ENCODE measurements at regions of chr6 and their contacts with region 1.

Region 1: DNA sequence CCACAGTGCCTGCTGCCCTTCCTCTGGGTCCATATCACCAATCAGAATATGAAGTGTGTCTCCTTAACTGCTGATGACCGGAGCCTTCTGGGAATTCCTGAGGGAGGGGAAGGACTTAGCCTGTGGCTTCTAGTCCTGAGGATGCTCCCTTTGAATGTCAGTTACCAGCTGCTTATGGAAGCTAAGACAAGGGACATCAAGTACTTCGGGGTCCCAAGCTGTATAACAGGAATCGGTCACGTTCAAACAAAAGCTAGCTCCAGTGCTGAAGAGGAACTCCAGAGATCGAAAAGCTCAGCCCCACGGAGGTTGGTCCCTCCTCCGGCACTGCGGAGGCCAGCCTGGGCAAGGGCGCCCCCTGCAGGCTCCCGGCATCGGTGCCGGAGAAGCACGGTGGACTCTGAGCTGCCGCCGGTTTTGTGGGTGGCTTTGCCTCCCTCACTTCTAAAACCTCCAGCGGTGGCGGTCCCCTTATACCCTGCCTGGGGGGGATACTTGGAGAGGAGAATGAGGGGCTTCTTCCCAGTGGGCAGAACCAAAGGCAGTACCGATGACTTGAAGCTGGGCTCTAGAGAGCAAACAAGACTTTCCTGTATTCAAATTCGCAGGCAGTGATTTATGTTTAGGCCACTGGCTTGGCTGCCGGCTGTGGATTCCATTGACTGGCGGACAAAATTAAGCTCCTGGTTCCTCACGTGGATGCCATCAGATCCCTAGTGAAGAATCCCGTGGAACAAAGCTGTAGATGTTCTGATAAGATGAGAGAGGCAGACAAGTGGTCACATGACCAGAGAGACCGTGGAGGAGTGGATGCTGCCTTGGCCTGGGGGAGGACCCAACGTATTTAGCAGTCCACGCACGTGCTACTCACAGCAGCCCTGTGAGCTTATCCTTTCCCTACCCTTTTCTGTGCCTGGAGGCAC is 16.2 kb upstream of the UBR2 start:
- DNase-seq: peak; percentile 93
- CTCF ChIP-seq: peak; percentile 98

Region 2: DNA sequence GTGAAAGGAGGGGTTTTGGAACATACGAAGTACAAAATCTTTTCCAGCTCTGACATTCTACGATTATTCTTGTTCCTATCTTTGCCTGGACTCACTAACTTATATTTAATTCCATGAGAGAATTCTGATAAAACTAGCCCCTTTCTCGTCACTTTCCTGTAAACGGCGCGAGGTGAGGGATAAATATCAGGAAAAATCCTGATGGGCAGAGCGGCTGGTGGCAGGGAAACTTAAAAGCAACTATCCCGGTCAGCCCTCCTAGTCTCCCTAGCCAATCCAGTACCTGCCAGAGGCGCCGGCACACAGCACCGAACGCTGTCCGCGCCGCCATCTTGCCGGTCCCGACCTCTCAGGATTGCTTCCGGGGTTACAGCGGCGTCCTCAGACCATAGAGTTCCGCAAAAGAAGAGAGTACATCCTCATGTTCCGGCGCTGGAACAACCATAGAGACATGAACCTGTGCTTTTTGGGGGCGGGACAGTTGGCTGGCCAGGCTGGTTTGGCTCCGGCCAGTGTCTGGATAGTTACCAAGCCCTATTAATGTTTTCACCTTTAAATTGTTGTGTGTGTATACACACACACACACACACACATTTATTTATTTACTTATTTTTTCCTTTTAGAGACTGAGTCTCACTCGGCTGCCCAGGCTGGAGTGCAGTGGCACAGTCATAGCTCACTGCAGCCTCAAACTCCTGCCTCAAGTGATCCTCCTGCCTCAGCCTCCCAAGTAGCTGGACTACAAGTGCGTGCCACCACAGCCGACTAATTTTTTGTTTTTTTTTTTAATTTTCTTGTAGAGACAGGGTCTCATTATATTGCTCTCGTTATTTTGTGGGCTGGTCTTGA is 329.9 kb before region 1 on chr6 and contains the start of gene MRPS10:
- CTCF ChIA-PET with region 1: interaction called, 13 read pairs
- POLR2A ChIA-PET with region 1: no interaction called
- DNase-seq: peak; percentile 92
- CTCF ChIP-seq: no peak

Region 3: GRCh38 chr6:42271834-42272805 is 275.5 kb before region 1 on chr6:
- CTCF ChIA-PET with region 1: interaction called, 13 read pairs
- POLR2A ChIA-PET with region 1: no interaction called
- DNase-seq: no peak
- CTCF ChIP-seq: no peak

Region 4: GRCh38 chr6:42332916-42333315 is 214.8 kb before region 1 on chr6:
- CTCF ChIA-PET with region 1: interaction called, 13 read pairs
- POLR2A ChIA-PET with region 1: no interaction called
- DNase-seq: no peak
- CTCF ChIP-seq: no peak

Region 5: DNA sequence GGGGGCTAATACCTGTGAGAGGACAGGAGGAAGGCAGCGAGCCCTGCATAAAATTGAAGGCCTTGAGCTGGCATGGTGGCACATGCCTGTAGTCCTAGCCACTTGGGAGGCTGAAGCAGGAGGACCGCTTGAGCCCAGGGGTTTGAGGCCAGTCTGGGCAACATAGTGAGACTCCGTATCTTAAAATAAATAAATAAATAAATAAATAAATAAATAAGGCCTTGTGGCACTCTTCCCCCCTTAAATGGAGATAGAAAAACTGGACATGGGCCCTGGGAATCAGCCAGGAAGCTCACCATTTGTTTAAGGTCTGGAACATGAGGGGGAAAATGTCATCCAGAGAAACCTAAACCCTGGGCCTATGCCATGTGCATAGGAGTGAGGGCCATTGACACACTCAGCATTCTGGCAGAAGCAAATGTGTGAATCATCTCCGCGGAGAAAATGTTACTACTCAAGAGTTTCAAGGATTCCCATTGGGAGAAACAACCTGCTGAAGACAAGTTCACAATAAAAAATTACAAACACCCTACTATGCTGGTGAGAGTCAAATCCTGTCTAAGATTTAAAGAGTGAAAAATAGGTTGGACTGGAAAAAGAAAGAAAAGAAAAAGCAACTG is 35.8 kb before region 1 on chr6:
- CTCF ChIA-PET with region 1: interaction called, 29 read pairs
- POLR2A ChIA-PET with region 1: no interaction called
- DNase-seq: no peak
- CTCF ChIP-seq: no peak

Region 6: GRCh38 chr6:42537536-42537935 is 10.1 kb before region 1 on chr6:
- CTCF ChIA-PET with region 1: interaction called, 41 read pairs
- POLR2A ChIA-PET with region 1: no interaction called
- DNase-seq: no peak
- CTCF ChIP-seq: no peak

Region 7: DNA sequence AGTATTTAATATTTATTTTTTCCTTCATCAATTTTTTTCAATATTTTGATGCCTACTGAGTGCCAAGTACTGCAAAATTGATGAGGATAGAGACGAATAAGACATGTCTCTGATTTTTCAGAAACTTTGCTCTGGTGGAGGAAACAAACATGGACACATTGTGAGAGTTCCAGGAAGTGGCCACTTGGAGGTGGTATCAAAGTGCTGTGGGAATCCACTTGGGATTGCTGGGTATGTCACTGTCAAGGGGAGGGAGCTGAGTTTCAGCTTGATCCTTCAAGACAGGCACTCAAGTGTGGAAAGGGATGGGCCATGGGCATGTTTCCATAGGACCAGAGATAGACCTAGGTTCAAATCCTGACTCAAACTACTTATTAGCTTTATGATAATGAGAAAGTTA is 855.2 kb after region 1 on chr6:
- CTCF ChIA-PET with region 1: no interaction called
- POLR2A ChIA-PET with region 1: no interaction called
- DNase-seq: no peak
- CTCF ChIP-seq: no peak